Common myeloid progenitor, CD34-positive (primary cell): ENCODE measurements at regions of chr15 and their contacts with region 1.

Region 1: DNA sequence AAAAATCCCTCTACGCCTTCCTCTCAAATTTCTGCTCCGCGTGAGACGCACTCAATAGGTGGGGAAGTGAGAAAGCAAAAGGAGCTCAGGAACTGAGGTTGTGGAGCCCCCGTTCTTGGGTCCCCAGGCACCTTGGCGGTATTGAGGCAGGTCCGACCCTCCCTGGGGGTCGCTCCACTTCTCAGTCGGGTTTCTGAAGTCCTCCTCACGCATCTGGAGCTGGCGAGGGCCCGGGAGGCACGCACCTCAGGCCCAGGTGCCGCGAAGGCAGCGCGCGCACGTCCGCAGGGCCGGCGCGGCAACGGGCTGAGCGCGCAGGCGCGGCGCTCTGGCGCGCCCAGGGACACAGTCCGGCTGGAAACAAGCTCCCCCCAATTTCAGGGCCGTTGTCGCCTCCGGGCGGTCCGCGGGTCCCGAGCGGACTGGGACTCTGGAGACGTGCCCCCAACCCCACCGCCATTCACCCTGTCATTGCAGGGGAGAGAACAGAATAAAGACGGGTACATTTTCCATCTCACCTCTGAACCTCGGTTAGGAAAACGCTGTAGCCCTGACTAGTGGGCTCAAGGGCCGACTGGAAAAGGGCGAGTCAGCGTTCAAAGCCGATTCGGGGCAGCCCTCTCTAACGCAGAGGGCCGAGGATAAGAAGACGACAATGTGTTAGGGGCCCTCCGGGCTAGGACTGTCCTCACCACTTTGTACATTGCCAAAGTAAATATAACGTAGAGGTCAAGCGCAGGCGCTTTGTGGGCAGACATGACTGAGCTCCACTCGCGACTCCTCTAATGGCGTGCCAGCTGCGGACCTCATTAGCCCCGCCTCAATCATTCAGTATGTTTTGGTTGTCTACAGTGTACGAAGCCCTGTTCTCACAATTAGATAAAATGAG is at the start of gene ZNF770:
- DNase-seq: peak; percentile 83 to 90 (median 90)
- H3K4me3 ChIP-seq: peak within 1 kb of the TSS; percentile 75 to 100 (median 93)
- H3K27ac ChIP-seq: peak within 1 kb of the TSS; percentile 94 to 98
- H3K4me1 ChIP-seq: peaks cover 12 to 19% (median 15%) of the 10 kb centered on the region in 4 experiments
- H3K27me3 ChIP-seq: peaks cover 0 to 3% (median 0%) of the 10 kb centered on the region in 5 experiments

Region 2: GRCh38 chr15:34969340-34970097 is 18.7 kb before region 1 on chr15 and contains the start of gene AQR:
- CTCF ChIA-PET with region 1: interaction called, 12 read pairs
- POLR2A ChIA-PET with region 1: interaction called, 18 read pairs
- DNase-seq: peak; percentile 96 to 97 (median 96)
- H3K4me3 ChIP-seq: peak within 1 kb of the TSS; percentile 93 to 98 (median 96)
- H3K27ac ChIP-seq: peak within 1 kb of the TSS; percentile 76 to 91
- H3K4me1 ChIP-seq: peaks cover 11 to 21% (median 18%) of the 10 kb centered on the region in 4 experiments
- H3K27me3 ChIP-seq: no peaks in the 10 kb centered on the region

Region 3: DNA sequence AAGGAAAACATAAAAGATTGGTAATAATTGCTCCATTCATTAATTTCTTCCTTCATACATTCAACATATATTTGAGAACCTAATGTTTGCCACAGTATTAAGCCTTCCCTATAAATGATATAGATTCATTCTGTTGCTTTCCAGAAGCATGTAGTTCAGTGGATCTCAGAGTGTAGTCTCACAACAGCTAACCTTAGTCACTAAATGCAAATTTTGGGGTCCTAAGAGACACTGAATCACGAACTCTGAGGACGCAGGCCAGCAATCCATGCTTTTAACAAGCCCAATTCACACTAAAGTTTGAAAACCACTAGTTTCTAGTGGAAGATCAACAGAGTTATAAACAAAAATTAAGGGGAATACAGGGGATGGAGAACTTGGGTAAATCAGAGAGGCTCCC is 11.5 kb before region 1 on chr15:
- CTCF ChIA-PET with region 1: interaction called, 12 read pairs
- POLR2A ChIA-PET with region 1: interaction called, 3 read pairs
- DNase-seq: no peak
- H3K4me3 ChIP-seq: no peak overlapping the region
- H3K27ac ChIP-seq: no peak overlapping the region
- H3K4me1 ChIP-seq: no peaks in the 10 kb centered on the region
- H3K27me3 ChIP-seq: no peaks in the 10 kb centered on the region